ENCODE measurements at regions of chr9 and their contacts with region 1.

Region 1: DNA sequence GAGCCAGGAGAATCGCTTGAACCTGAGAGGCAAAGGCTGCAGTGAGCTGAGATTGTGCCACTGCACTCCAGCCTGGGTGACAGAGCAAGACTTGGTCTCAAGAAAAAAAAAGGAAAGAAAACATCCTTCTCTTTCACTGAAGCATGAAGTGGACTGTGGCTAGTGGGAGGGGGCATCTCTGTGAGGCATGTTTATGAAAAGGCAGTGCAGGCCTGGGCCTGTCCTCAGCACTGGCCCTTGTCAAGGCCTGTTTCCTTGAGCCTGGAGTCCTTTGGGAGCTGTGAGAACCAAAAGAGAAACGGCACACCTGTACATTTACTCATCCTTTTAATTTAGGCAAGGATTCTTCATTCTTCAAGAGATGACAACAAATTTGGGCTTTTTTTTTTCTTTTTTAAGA is 18.3 kb upstream of the FUBP3 start:
- DNase-seq: no peak
- H3K4me3 ChIP-seq: no peak overlapping the region
- H3K27ac ChIP-seq: no peak overlapping the region
- H3K4me1 ChIP-seq: no peaks in the 10 kb centered on the region
- H3K27me3 ChIP-seq: peaks cover 14% of the 10 kb centered on the region
- CTCF ChIP-seq: no peak

Region 2: DNA sequence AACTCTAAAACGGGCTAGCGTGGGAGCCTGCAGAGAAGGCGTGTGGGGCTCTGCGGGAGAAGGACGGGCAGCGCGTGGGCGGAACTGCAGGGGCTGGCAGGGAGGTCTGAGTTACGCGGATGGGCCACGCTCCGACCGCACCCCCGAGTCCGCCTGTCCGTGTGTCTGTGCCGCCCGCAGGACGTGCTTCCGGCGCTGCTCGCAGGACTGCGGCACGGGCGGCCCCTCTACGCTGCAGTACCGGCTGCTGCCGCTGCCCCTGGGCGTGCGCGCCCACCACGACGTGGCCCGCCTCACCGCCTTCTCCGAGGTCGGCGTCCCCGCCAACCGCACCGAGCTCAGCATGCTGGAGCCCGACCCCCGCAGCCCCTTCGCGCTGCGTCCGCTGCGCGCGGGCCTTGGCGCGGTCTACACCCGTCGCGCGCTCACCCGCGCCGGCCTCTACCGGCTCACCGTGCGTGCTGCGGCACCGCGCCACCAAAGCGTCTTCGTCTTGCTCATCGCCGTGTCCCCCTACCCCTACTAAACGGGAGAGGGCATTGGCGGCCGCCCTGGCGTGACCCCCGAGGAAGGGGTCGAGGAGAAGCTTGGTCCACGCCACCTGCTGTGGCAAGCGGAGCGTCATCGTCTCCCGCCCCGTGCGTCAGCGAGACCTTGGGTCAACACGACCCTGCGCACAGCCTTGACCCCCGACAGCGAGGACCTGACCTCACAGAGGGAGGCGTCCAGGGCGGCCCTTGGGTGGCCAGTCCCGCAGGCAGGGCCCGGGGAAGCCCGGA is 127.7 kb before region 1 on chr9:
- CTCF ChIA-PET with region 1: no interaction called
- POLR2A ChIA-PET with region 1: no interaction called
- intact Hi-C with region 1: no loop called
- DNase-seq: peak; percentile 70
- H3K4me3 ChIP-seq: peak overlapping the region; percentile 34
- H3K27ac ChIP-seq: no peak overlapping the region
- H3K4me1 ChIP-seq: no peaks in the 10 kb centered on the region
- H3K27me3 ChIP-seq: peaks cover 23% of the 10 kb centered on the region
- CTCF ChIP-seq: peak; percentile 61

Region 3: GRCh38 chr9:130501645-130502044 is 59.4 kb before region 1 on chr9:
- CTCF ChIA-PET with region 1: no interaction called
- POLR2A ChIA-PET with region 1: no interaction called
- intact Hi-C with region 1: no loop called
- DNase-seq: no peak
- H3K4me3 ChIP-seq: no peak overlapping the region
- H3K27ac ChIP-seq: no peak overlapping the region
- H3K4me1 ChIP-seq: no peaks in the 10 kb centered on the region
- H3K27me3 ChIP-seq: no peaks in the 10 kb centered on the region
- CTCF ChIP-seq: no peak

Region 4: DNA sequence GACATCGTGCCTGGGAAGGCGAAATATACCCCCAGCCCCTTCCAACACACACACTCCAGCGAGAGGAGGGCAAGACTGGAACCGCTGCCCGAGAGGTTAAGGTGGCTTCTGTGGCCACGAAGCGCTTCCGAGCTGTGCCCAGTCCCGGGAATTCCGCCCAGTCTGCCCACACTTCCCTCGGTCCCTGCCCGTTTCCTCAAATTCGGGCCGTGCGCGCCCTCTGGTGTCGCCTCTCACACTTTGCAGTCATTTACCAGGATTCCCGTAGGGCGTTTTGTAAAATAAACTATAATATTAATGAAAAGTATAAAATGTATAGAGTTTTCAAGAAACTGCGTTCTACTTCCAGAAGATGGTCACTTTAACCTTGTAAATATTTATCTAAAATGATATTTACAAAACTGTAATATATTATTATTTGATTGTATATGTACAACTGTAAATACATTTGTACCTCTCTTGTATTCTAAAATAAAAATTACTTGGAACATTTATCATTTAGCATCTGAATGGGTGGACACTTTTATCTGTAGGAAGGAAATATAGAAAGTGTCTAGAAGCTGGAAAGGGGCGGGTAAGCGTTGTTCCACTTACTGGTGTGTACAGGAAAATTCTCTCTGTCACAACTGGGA is 121.5 kb after region 1 on chr9:
- CTCF ChIA-PET with region 1: no interaction called
- POLR2A ChIA-PET with region 1: interaction called, 15 read pairs
- intact Hi-C with region 1: no loop called
- DNase-seq: peak; percentile 83
- H3K4me3 ChIP-seq: peak overlapping the region; percentile 55
- H3K27ac ChIP-seq: no peak overlapping the region
- H3K4me1 ChIP-seq: peaks cover 13% of the 10 kb centered on the region
- H3K27me3 ChIP-seq: peaks cover 5% of the 10 kb centered on the region
- CTCF ChIP-seq: peak; percentile 91

Region 5: DNA sequence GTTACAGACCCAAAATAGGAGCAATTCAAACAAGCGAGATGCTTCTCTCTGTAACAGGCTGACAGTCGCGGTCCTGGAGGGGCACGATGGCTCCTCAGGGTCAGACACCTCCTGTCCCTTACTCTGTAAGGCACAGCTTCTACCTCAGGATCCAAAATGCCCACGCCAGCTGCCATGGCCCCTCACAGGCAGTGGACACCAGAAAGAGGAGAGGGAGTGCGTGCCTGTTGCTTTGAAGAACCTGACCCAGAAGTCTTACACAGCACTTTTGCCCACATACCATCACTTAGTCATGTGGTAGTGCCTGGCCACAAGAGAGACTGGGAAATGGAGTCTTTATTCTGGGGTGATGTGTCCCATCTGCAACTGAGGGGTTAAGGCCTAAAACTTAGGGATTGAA is 262.4 kb after region 1 on chr9:
- CTCF ChIA-PET with region 1: no interaction called
- POLR2A ChIA-PET with region 1: no interaction called
- intact Hi-C with region 1: no loop called
- DNase-seq: no peak
- H3K4me3 ChIP-seq: no peak overlapping the region
- H3K27ac ChIP-seq: peak overlapping the region; percentile 88
- H3K4me1 ChIP-seq: peaks cover 34% of the 10 kb centered on the region
- H3K27me3 ChIP-seq: no peaks in the 10 kb centered on the region
- CTCF ChIP-seq: no peak

Region 6: GRCh38 chr9:131334629-131335367 is 773.7 kb after region 1 on chr9:
- CTCF ChIA-PET with region 1: no interaction called
- POLR2A ChIA-PET with region 1: no interaction called
- intact Hi-C with region 1: no loop called
- DNase-seq: peak; percentile 56
- H3K4me3 ChIP-seq: no peak overlapping the region
- H3K27ac ChIP-seq: no peak overlapping the region
- H3K4me1 ChIP-seq: peaks cover 16% of the 10 kb centered on the region
- H3K27me3 ChIP-seq: no peaks in the 10 kb centered on the region
- CTCF ChIP-seq: no peak